ENCODE measurements at regions of chr15 and their contacts with region 1.

Region 1: DNA sequence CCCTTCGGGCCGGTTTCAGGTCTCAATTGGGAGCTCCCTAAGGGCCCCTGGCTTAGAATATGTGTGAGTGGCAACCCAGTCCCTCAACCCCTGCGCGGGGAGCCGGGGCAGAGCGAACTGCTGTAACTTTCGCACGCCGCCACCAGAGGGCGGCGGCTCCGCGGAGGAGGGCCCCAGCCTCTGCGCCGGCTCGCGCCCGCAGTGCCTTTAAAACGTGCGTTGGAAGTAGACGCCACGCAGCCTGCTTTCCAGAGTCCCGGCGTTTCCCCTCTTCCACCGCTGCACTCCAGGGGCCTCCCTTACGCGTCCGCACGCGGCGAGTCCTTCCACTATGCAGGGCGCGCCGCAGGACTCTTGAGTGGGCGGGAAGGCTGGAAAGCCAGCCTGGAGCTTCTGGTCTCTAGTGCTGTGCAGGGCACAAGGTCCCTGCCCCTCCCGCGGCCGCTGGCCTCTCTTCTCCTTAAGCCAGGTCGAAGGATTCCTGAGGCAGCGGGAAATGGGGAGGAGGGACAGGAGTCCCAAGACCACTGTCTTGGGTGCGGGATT is 23.7 kb upstream of the RNU6-1 start:
- DNase-seq: peak; percentile 55 to 85
- ATAC-seq: peak; percentile 91 to 100 (median 99)
- H3K4me3 ChIP-seq: peak overlapping the region; percentile 9
- H3K4me3 Mint-ChIP-seq: no peak overlapping the region
- H3K27ac ChIP-seq: no peak overlapping the region
- H3K27ac Mint-ChIP-seq: no peak overlapping the region
- H3K4me1 ChIP-seq: peaks cover 13% of the 10 kb centered on the region
- H3K4me1 Mint-ChIP-seq: peaks cover 5 to 6% of the 10 kb centered on the region in 2 donors
- H3K27me3 ChIP-seq: peaks cover 4% of the 10 kb centered on the region
- H3K27me3 Mint-ChIP-seq: peaks cover 19 to 25% of the 10 kb centered on the region in 2 donors
- CTCF ChIP-seq: peak; percentile 95

Region 2: GRCh38 chr15:68154923-68155559 is 291.5 kb after region 1 on chr15:
- intact Hi-C with region 1: loop called (anchors 1 kb)
- DNase-seq: peak in 1 of 2 donors; percentile 54
- ATAC-seq: no peak
- H3K4me3 ChIP-seq: no peak overlapping the region
- H3K4me3 Mint-ChIP-seq: no peak overlapping the region
- H3K27ac ChIP-seq: no peak overlapping the region
- H3K27ac Mint-ChIP-seq: no peak overlapping the region
- H3K4me1 ChIP-seq: no peaks in the 10 kb centered on the region
- H3K4me1 Mint-ChIP-seq: peaks cover 7% of the 10 kb centered on the region in 2 donors
- H3K27me3 ChIP-seq: no peaks in the 10 kb centered on the region
- H3K27me3 Mint-ChIP-seq: no peaks in the 10 kb centered on the region
- CTCF ChIP-seq: peak; percentile 51

Region 3: GRCh38 chr15:68210821-68211655 is 347.5 kb after region 1 on chr15:
- intact Hi-C with region 1: loop called (anchors 1 kb)
- DNase-seq: peak; percentile 30 to 66
- ATAC-seq: peak in 2 of 3 donors; percentile 67 to 74
- H3K4me3 ChIP-seq: no peak overlapping the region
- H3K4me3 Mint-ChIP-seq: no peak overlapping the region
- H3K27ac ChIP-seq: no peak overlapping the region
- H3K27ac Mint-ChIP-seq: no peak overlapping the region
- H3K4me1 ChIP-seq: peaks cover 28% of the 10 kb centered on the region
- H3K4me1 Mint-ChIP-seq: peaks cover 0 to 28% of the 10 kb centered on the region in 2 donors
- H3K27me3 ChIP-seq: no peaks in the 10 kb centered on the region
- H3K27me3 Mint-ChIP-seq: no peaks in the 10 kb centered on the region
- CTCF ChIP-seq: peak; percentile 66